SK-N-SH (cell line): ENCODE measurements at regions of chr22 and their contacts with region 1.

Region 1: GRCh38 chr22:18077639-18078328 is at the start of gene PEX26:
- DNase-seq: peak; percentile 95
- H3K4me3 ChIP-seq: peak within 1 kb of the TSS; percentile 90 to 96
- H3K27ac ChIP-seq: peak within 1 kb of the TSS; percentile 58 to 80
- H3K4me1 ChIP-seq: peaks cover 14 to 23% of the 10 kb centered on the region in 2 experiments
- H3K27me3 ChIP-seq: no peaks in the 10 kb centered on the region
- CTCF ChIP-seq: no peak
- EP300 ChIP-seq: no peak
- RAD21 ChIP-seq: no peak
- polyA plus RNA-seq, gene PEX26: 13.0 and 17.5 TPM in 2 replicates

Region 2: DNA sequence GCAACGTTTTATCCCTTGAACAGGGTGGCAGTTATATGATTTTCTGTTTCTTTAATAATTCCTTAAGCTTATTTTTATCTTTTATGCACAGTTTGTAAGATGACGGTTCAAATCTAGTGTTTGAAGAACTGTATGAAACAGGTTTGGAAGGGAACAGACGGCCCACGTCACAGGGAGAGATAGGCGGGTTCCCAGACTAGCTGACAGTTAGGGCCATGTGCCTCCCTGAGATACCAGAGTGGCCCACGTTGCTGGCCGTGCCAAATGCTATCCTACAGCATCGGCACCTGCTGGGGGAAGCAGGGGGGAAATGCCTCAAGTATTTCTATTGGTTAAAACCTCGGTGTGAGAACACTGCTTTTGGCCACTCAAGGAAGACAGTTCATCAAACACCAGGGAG is 253.3 kb before region 1 on chr22:
- CTCF ChIA-PET with region 1: interaction called, 186 read pairs
- POLR2A ChIA-PET with region 1: no interaction called
- DNase-seq: no peak
- H3K4me3 ChIP-seq: no peak overlapping the region
- H3K27ac ChIP-seq: no peak overlapping the region
- H3K4me1 ChIP-seq: no peaks in the 10 kb centered on the region
- H3K27me3 ChIP-seq: no peaks in the 10 kb centered on the region
- CTCF ChIP-seq: no peak
- EP300 ChIP-seq: no peak
- RAD21 ChIP-seq: no peak

Region 3: DNA sequence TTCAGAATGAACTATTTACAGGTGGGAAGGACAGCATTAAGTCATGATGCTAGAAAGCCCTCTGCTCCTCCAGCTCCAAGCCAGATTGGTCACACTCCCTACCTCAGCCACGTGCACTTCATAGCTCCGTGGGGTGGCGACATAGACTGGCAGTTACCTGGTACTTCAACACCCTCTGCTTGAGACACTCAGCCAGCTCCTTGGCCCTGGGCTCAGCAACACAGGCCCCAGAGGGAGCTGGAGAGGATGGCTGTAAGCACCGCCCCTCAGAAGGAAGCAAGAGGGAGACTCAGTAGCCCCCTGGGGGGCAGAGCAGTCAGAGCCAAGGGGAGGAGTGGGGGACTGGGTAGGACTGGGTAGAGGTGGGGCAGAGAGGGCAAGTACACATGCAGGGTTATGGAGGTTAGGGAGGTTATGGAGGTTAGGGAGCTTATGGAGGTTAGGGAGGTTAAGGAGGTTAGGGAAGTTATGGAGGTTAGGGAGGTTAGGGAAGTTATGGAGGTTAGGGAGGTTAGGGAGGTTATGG is 201.4 kb before region 1 on chr22:
- CTCF ChIA-PET with region 1: interaction called, 11 read pairs
- POLR2A ChIA-PET with region 1: no interaction called
- DNase-seq: no peak
- H3K4me3 ChIP-seq: no peak overlapping the region
- H3K27ac ChIP-seq: no peak overlapping the region
- H3K4me1 ChIP-seq: peaks cover 0 to 36% of the 10 kb centered on the region in 2 experiments; a peak in 2 of 4 replicates
- H3K27me3 ChIP-seq: no peaks in the 10 kb centered on the region
- CTCF ChIP-seq: no peak
- EP300 ChIP-seq: no peak
- RAD21 ChIP-seq: no peak

Region 4: GRCh38 chr22:17910561-17911311 is 167.0 kb before region 1 on chr22:
- CTCF ChIA-PET with region 1: interaction called, 58 read pairs
- POLR2A ChIA-PET with region 1: no interaction called
- DNase-seq: peak; percentile 68
- H3K4me3 ChIP-seq: peak overlapping the region in 1 of 2 experiments; percentile 57; a peak in 2 of 4 replicates
- H3K27ac ChIP-seq: peak overlapping the region; percentile 60 to 94
- H3K4me1 ChIP-seq: peaks cover 20 to 33% of the 10 kb centered on the region in 2 experiments
- H3K27me3 ChIP-seq: no peaks in the 10 kb centered on the region
- CTCF ChIP-seq: peak; percentile 66
- EP300 ChIP-seq: peak in 1 of 2 experiments; percentile 55; a peak in 1 of 4 replicates
- RAD21 ChIP-seq: peak; percentile 88

Region 5: GRCh38 chr22:18001040-18001893 is 76.5 kb before region 1 on chr22:
- CTCF ChIA-PET with region 1: interaction called, 26 read pairs
- POLR2A ChIA-PET with region 1: no interaction called
- DNase-seq: peak; percentile 95
- H3K4me3 ChIP-seq: peak overlapping the region; percentile 69 to 92
- H3K27ac ChIP-seq: peak overlapping the region; percentile 84 to 97
- H3K4me1 ChIP-seq: peaks cover 4 to 6% of the 10 kb centered on the region in 2 experiments; a peak in 2 of 4 replicates
- H3K27me3 ChIP-seq: no peaks in the 10 kb centered on the region
- CTCF ChIP-seq: peak; percentile 54
- EP300 ChIP-seq: no peak
- RAD21 ChIP-seq: peak; percentile 52

Region 6: DNA sequence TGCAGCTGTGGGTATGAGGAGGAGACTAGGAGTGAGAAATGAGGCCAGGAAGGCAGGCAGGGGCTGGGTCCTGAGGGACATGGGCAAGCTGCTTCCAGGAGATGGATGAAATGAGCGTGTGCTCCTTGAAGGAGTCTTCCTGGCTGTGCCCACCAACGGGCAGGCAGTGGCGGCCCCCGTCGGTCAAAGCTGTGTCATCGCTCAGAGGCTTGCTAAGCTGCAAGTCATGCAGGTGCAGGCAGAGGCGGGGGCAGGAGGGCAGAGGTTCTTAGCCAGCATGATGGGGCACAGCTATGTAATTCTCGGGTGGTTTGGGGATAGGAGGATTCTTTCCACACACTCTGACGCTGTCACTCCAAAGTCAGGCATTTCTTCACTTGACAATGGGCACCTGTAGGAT is 12.5 kb before region 1 on chr22:
- CTCF ChIA-PET with region 1: interaction called, 32 read pairs
- POLR2A ChIA-PET with region 1: interaction called, 5 read pairs
- DNase-seq: no peak
- H3K4me3 ChIP-seq: no peak overlapping the region
- H3K27ac ChIP-seq: no peak overlapping the region
- H3K4me1 ChIP-seq: 0 out of 4 replicates have a peak, but pooled peaks cover 0 to 12% of the 10 kb centered on the region in 2 experiments
- H3K27me3 ChIP-seq: no peaks in the 10 kb centered on the region
- CTCF ChIP-seq: peak; percentile 26; the same call in 1 of the 2 replicates
- EP300 ChIP-seq: no peak
- RAD21 ChIP-seq: no peak